Left cardiac atrium (tissue), 4 donors: ENCODE measurements at regions of chr19 and their contacts with region 1.

Region 1: GRCh38 chr19:7522072-7522922 is at the start of gene MCOLN1:
- DNase-seq: peak; percentile 100
- ATAC-seq: peak; percentile 92 to 95
- total RNA-seq, gene MCOLN1: 21.2 to 25.0 TPM

Region 2: DNA sequence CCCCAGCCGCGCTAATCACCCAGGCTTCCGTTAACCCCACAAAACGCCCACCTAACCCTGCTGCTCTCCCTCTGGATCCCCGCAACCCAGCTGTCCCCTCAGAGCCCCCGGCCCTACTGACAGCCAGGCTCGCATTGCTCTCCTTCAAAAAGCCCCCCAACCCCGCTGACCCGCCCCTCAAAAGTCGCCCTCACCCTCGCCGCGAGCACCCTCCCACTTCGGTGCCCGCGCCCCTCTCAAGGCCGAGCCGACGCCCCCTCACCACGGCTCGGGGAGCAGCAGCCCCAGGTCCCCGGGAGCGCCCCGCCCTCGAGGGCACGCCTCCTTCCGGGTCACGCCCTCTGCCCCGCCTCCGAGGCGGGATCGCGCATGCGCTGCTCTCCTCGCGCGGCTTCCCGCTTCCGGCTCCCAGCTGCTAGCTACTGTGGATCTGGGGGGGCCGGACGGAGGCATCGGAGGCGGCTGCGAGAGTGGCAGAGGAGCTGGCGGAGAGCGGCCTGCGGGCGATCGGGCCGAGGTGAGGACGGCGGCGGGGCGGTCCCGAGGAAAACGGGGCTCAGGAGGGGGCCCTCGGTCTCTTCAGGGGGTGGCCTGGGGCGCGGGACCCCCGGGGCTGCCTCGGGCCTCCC is 127.5 kb before region 1 on chr19:
- intact Hi-C with region 1: loop called in 1 of 2 experiments (anchors 10 kb)
- DNase-seq: peak; percentile 89
- ATAC-seq: peak; percentile 99 to 100

Region 3: DNA sequence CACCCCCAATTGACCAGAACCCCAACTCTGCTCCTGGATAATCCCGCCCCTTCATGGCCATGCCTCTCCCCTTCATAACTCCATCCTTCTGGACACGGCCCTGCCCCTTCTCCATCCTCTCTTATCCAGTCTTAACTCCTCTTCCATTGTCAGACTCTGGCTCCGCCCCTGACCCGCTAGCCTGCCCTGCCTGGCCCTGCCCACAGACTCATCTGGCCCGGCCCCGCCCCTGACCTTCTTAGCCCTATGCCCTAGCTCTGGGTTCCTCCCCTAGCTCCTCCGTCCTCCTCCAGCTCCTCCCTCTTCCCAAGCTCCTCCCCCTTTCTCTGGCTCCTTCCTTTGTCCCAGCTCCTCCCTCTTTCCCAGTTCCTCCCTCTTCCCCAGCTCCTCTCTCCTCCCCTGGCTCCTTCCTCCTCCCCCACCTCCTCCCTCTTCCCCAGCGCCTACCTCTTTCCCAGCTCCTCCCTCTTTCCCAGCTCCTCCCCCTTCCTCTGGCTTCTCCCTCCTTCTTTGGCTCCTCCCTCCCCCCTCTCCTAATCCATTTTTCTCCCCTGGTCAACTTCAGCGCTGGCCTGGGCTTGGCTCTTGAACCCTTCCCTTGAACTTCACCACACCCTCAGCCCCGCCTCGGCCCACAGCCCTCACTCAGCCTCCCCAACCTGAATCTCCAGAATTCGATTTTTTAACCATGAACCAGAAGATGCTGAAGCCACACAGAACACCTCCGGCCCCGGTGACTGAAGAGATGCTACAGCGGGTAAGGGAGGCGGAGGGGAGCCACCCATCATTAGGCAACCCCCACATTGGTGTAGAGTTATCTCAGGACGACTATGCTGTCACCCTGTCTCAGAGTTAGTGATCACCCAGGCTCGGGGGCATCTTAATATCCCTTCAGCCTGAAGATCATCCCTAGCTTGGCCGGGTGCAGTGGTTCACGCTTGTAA is 15.6 kb before region 1 on chr19:
- intact Hi-C with region 1: no loop called
- DNase-seq: peak; percentile 88
- ATAC-seq: peak; percentile 71 to 93

Region 4: GRCh38 chr19:7652061-7652641 is 129.9 kb after region 1 on chr19:
- intact Hi-C with region 1: no loop called
- DNase-seq: peak; percentile 80
- ATAC-seq: peak; percentile 83 to 87